Right ventricle myocardium inferior (tissue), 1 donor: ENCODE measurements at regions of chr15 and their contacts with region 1.

Region 1: DNA sequence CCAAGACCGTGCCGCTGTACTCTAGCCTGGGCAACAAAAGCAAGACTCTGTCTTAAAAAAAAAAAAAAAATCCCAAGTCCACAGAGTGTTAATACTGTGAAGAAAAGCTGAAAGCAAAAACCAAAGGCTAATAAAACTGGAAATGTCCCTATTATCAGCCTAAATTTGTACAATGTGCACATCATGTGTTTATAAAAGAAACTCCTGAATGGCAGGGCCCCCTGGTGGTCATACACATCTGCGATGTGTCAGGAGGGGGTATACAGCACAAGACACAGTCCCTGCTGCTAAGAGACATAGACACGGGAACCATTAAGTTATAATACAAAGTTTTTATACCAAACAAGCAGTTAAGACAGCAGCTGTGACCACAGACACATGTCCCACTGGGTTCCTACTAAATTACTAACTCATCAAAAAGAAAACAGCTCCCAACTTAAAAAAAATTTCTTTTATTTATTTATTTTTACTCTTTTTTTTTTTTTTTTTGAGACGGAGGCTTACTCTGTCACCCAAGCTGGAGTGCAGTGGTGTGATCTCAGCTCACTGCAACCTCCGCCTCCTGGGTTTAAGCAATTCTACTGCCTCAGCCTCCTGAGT is 31.0 kb downstream of the IDH2 start:
- DNase-seq: peak; percentile 87
- ATAC-seq: peak; percentile 74

Region 2: DNA sequence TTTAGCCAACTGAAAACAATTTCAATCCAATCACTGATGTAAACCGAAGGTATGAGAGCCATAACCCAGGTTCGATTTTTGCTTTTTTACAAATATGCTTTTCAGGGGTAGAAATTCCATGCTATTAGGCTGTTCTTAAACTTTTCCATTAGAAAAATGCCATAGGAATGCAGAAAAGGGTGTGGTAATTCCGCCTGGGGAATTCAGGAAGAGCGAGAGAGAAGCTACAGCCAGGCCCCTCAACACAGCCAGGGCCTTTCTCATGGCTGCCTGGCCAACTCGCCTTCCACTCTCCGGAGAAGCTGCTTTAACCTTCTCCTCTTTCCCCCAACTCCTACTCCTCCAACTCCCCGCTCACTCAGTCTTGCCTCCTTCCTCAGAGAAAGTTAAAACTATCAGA is 505.2 kb before region 1 on chr15:
- intact Hi-C with region 1: no loop called
- DNase-seq: no peak
- ATAC-seq: no peak

Region 3: DNA sequence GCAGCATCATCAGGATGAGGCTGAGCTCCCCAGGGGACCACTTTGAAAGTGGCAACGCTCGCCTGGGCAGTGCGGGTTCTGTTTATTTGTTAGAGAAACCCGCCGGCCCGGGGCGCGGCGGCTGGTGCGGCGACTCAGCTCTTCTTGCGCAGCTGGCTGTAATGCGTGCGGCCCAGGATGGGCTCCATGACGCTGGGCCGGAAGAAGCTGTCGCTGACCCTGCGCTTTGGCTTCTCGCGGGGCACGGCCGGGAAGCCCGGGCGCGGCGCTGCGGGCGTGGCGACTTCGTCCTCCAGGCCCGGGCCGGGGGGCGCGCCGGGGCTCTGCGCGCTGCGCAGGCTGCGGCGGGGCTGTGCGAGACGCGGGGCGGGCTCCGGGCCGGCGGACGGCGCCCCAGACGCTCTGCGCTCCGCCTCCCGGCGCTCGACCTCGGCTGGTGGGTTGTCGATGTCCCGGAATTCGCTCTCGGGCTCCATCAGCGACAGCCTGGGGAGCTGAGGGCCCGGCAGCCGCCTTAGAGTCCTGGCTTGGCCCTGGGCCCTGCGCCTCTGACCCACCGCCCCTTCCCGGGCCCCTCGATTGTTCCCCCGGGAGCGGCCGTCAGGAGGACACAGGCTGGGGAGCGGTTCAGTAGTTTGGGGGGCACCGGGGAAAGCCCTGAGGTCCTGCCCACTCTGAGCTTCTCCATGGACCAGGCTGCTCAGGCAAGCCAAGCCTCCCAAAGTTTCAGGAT is 405.7 kb before region 1 on chr15:
- intact Hi-C with region 1: no loop called
- DNase-seq: peak; percentile 85
- ATAC-seq: peak; percentile 79

Region 4: DNA sequence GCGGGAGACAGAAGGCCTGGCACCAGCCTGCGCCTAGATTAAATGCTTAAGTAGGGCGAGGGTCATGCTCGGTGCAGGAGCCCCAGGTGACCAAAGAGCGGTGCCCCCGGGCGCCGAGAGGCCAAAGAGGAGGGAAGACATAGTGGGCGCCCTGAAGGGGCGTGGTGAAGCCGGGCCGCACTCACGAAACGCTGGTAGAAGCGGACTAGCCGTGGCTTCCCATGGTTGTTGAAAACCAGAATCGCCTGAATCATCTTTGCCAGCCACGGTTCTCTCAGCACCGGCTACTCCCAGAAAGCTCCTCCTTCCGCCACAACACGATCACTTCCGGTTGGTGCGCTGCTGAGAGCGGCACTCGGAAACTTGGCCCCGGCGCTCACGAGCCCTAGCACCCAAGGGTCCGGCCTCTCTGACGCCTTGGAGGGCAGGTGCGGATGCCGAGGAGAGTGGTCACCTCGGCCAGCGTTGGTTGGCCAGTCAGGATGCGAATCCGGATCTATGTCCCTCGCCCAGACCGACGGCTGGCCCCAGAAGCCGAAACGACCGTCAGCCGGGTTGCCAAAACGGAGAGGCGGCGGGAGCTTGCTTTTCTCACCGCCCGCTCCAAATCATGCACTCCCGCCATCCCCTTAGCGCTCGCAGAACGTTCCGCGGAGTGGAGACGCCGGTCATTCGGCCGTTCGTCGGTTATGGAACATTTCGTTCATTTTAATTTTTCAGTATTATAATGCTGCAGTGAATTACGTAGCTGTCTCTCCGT is 177.4 kb before region 1 on chr15 and contains the start of gene AP3S2:
- intact Hi-C with region 1: loop called (anchors 10 kb)
- DNase-seq: peak; percentile 94
- ATAC-seq: peak; percentile 98
- total RNA-seq, gene AP3S2: 46.9 TPM

Region 5: DNA sequence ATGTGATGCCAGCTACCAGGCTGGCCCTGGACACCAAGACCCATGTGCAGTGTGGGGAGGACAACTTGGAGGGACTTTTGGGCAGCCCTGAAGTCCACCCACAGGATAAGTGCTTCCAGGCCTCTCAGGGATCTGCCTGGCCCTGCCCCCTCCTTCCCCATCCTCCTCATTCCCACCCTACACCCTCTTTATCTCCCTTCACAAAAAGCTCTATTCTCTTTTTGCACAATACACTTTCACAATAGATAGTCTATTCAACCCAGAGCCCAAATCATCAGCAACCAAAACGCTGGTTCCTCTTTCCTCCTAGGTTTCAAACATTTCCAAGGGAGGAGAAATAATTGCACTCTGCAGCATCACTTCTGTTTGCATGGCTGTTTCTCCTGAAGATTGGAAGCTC is 78.0 kb before region 1 on chr15:
- intact Hi-C with region 1: no loop called
- DNase-seq: no peak
- ATAC-seq: no peak